ENCODE measurements at regions of chr11 and their contacts with region 1.

Region 1: GRCh38 chr11:10653926-10654810 is 39.4 kb downstream of the IRAG1 start:
- DNase-seq: peak; percentile 46
- ATAC-seq: peak; percentile 64
- H3K4me3 Mint-ChIP-seq: no peak overlapping the region
- H3K27ac Mint-ChIP-seq: no peak overlapping the region
- H3K4me1 Mint-ChIP-seq: peaks cover 21% of the 10 kb centered on the region
- H3K27me3 Mint-ChIP-seq: no peaks in the 10 kb centered on the region
- CTCF ChIP-seq: peak; percentile 79

Region 2: DNA sequence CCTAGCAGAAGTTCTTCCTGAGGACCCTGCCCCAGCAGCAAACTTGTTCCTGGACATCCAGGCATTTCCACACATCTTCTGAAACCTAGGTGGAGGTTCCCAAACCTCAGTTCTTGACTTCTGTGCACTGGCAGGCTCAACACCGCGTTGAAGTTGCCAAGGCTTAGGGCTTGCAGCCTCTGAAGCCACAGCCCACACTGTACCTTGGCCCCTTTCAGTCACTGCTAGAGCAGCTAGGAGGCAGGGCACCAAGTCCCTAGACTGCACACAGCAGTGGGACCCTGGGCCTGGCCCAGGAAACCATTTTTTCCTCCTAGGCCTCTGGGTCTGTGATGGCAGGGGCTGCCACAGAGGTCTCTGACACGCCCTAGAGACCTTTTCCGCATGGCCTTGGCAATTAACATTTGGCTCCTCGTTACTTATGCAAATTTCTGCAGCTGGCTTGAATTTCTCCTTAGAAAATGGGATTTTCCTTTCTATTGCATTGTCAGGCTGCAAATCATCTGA is 519.1 kb before region 1 on chr11:
- CTCF ChIA-PET with region 1: no interaction called
- POLR2A ChIA-PET with region 1: no interaction called
- intact Hi-C with region 1: no loop called
- DNase-seq: no peak
- ATAC-seq: no peak
- H3K4me3 Mint-ChIP-seq: no peak overlapping the region
- H3K27ac Mint-ChIP-seq: no peak overlapping the region
- H3K4me1 Mint-ChIP-seq: no peaks in the 10 kb centered on the region
- H3K27me3 Mint-ChIP-seq: no peaks in the 10 kb centered on the region
- CTCF ChIP-seq: no peak

Region 3: GRCh38 chr11:10455637-10456487 is 198.3 kb before region 1 on chr11:
- CTCF ChIA-PET with region 1: interaction called, 10 read pairs
- POLR2A ChIA-PET with region 1: no interaction called
- intact Hi-C with region 1: no loop called
- DNase-seq: peak; percentile 89
- ATAC-seq: peak; percentile 70
- H3K4me3 Mint-ChIP-seq: peak overlapping the region; percentile 91
- H3K27ac Mint-ChIP-seq: peak overlapping the region; percentile 97
- H3K4me1 Mint-ChIP-seq: peaks cover 81% of the 10 kb centered on the region
- H3K27me3 Mint-ChIP-seq: no peaks in the 10 kb centered on the region
- CTCF ChIP-seq: no peak

Region 4: GRCh38 chr11:10641177-10641911 is 12.8 kb before region 1 on chr11:
- CTCF ChIA-PET with region 1: interaction called, 16 read pairs
- POLR2A ChIA-PET with region 1: interaction called, 3 read pairs
- intact Hi-C with region 1: no loop called
- DNase-seq: no peak
- ATAC-seq: no peak
- H3K4me3 Mint-ChIP-seq: no peak overlapping the region
- H3K27ac Mint-ChIP-seq: no peak overlapping the region
- H3K4me1 Mint-ChIP-seq: no peaks in the 10 kb centered on the region
- H3K27me3 Mint-ChIP-seq: no peaks in the 10 kb centered on the region
- CTCF ChIP-seq: no peak

Region 5: DNA sequence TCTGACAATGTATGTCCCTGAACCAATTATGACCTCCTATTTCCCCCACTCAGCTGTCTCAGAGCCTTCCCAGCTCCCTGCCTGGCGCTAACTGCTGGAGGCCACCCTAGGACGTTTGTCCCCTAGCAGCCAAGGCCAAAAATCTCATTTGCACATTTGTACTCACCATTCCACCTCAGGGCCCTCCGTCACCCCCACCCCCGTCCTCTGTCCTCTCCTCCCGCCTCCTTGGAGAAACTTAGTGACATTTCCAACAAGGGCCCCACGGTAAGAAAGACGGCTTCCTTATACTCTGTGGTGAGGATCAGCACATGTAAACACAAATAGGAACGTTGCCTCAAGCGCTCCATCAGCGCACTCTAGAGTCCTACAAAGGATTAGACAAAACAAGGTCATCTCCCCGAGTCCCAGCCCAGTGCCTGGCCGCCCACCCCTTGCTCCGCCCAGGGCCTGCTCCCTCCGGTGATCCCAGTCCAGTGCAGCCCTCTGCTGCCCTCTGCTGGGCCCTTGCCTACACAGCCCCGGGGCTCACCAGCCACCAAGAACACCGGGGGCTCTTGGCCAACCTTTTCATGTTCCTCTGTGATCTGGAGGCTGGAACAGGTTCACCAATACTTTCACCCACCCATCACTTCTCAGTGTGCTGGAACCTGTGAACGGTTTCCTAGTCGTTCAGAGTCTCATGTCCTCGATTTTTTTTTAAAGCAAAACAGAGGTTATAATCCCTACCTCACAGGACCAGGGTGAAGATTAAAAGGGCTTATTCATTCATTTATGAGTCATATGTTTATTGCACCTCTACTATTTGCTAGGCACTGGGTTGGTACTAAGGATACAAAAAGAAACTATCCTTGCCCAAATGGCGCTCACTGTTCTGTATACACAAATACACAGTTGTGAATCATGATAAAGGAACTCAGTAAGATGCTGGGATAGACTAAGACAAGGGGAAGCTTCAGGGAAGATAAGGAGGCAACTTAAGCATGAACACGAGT is 81.6 kb after region 1 on chr11:
- CTCF ChIA-PET with region 1: interaction called, 3 read pairs
- POLR2A ChIA-PET with region 1: no interaction called
- intact Hi-C with region 1: loop called (anchors 10 kb)
- DNase-seq: peak; percentile 96
- ATAC-seq: peak; percentile 100
- H3K4me3 Mint-ChIP-seq: no peak overlapping the region
- H3K27ac Mint-ChIP-seq: no peak overlapping the region
- H3K4me1 Mint-ChIP-seq: peaks cover 9% of the 10 kb centered on the region
- H3K27me3 Mint-ChIP-seq: peaks cover 1% of the 10 kb centered on the region
- CTCF ChIP-seq: peak; percentile 92

Region 6: GRCh38 chr11:10828402-10828801 is 174.2 kb after region 1 on chr11:
- CTCF ChIA-PET with region 1: no interaction called
- POLR2A ChIA-PET with region 1: no interaction called
- intact Hi-C with region 1: no loop called
- DNase-seq: no peak
- ATAC-seq: no peak
- H3K4me3 Mint-ChIP-seq: no peak overlapping the region
- H3K27ac Mint-ChIP-seq: no peak overlapping the region
- H3K4me1 Mint-ChIP-seq: peaks cover 5% of the 10 kb centered on the region
- H3K27me3 Mint-ChIP-seq: no peaks in the 10 kb centered on the region
- CTCF ChIP-seq: no peak